Right ventricle myocardium inferior (tissue), 1 donor: ENCODE measurements at regions of chr6 and their contacts with region 1.

Region 1: GRCh38 chr6:151475653-151476523 is 17.9 kb upstream of the CCDC170 start:
- DNase-seq: no peak
- ATAC-seq: no peak

Region 2: GRCh38 chr6:151409260-151409659 is 66.6 kb before region 1 on chr6:
- intact Hi-C with region 1: loop called (anchors 5 kb)
- DNase-seq: no peak
- ATAC-seq: no peak

Region 3: DNA sequence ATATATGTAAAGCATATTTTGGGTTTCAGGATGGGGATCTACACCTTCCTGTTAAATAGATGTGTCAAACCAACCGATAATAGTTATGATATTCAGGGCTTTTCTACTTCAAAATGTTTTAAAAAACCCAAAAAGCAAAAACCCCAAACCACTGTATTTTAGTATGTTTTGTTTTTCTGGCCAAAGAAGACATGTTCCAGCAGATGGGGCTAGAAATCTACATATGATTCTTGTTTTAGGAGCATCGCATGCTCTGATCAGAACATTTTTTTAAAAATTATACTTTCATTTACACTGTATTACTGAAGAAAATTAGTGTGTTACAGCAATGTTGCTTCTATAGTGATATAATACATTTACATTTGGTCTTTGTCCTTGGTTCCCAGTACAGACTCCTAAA is 35.0 kb before region 1 on chr6:
- intact Hi-C with region 1: loop called (anchors 5 kb)
- DNase-seq: no peak
- ATAC-seq: no peak